ENCODE measurements at regions of chr15 and their contacts with region 1.

Region 1: GRCh38 chr15:69468241-69469121 is 15.9 kb downstream of the RPLP1 start:
- DNase-seq: peak; percentile 72 to 97 (median 84)
- ATAC-seq: peak; percentile 88
- H3K4me3 ChIP-seq: peak overlapping the region in 1 of 2 experiments; percentile 14
- H3K4me3 Mint-ChIP-seq: peak overlapping the region; percentile 60
- H3K27ac ChIP-seq: peak overlapping the region; percentile 76 to 80
- H3K27ac Mint-ChIP-seq: peak overlapping the region; percentile 98
- H3K4me1 ChIP-seq: peaks cover 27% of the 10 kb centered on the region
- H3K4me1 Mint-ChIP-seq: peaks cover 23% of the 10 kb centered on the region
- H3K27me3 ChIP-seq: no peaks in the 10 kb centered on the region
- H3K27me3 Mint-ChIP-seq: no peaks in the 10 kb centered on the region
- CTCF ChIP-seq: no peak

Region 2: GRCh38 chr15:69160141-69160993 is 308.1 kb before region 1 on chr15 and contains the start of gene GLCE:
- CTCF ChIA-PET with region 1: no interaction called
- POLR2A ChIA-PET with region 1: no interaction called
- intact Hi-C with region 1: loop called in 1 of 2 experiments (anchors 5 kb)
- DNase-seq: peak; percentile 85 to 96 (median 92)
- ATAC-seq: peak; percentile 93
- H3K4me3 ChIP-seq: peak within 1 kb of the TSS; percentile 73 to 91
- H3K4me3 Mint-ChIP-seq: peak within 1 kb of the TSS; percentile 96
- H3K27ac ChIP-seq: peak within 1 kb of the TSS; percentile 51 to 58
- H3K27ac Mint-ChIP-seq: peak within 1 kb of the TSS; percentile 89
- H3K4me1 ChIP-seq: peaks cover 12% of the 10 kb centered on the region
- H3K4me1 Mint-ChIP-seq: peaks cover 21% of the 10 kb centered on the region
- H3K27me3 ChIP-seq: no peaks in the 10 kb centered on the region
- H3K27me3 Mint-ChIP-seq: peaks cover 6% of the 10 kb centered on the region
- CTCF ChIP-seq: no peak
- total RNA-seq, gene GLCE: 4.1 to 4.2 TPM

Region 3: DNA sequence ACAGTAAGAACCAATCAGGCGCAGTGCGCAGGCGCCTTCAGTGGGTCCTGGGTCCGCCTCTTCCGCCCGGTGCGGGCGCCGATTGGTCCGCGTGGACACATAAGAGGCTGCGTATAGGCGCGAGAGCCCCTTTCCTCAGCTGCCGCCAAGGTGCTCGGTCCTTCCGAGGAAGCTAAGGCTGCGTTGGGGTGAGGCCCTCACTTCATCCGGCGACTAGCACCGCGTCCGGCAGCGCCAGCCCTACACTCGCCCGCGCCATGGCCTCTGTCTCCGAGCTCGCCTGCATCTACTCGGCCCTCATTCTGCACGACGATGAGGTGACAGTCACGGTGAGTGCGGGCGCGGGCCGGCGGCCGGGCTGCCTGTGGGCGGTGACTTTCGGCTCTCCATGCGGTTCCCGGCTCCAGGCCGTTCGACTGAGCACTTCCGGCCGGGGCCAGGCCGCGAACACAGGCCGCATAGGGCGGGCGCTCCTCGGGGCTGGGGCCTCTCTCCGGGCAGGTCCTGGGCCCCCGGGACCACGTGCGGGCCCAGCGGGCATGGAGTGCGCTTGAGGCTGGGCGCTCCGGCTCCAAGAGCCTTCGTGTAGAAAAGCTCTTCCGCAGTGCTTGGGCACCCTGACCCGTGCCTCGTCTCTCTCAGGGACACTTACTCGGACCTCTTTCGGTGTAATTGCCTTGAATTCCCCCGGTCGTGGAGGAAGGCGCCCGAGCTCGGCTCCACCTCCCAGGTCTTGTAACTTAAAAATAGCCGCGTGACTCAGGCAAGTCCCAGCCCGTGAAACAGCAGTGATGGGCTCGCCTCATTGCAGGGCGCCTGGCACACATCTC is 15.6 kb before region 1 on chr15 and contains the start of gene RPLP1:
- CTCF ChIA-PET with region 1: interaction called, 54 read pairs
- POLR2A ChIA-PET with region 1: interaction called, 109 read pairs
- intact Hi-C with region 1: loop called (anchors 1 to 2 kb)
- DNase-seq: peak; percentile 91 to 97 (median 95)
- ATAC-seq: peak; percentile 88
- H3K4me3 ChIP-seq: peak within 1 kb of the TSS; percentile 86 to 91
- H3K4me3 Mint-ChIP-seq: peak within 1 kb of the TSS; percentile 97
- H3K27ac ChIP-seq: peak within 1 kb of the TSS; percentile 75 to 92
- H3K27ac Mint-ChIP-seq: peak within 1 kb of the TSS; percentile 99
- H3K4me1 ChIP-seq: peaks cover 32% of the 10 kb centered on the region
- H3K4me1 Mint-ChIP-seq: peaks cover 47% of the 10 kb centered on the region
- H3K27me3 ChIP-seq: no peaks in the 10 kb centered on the region
- H3K27me3 Mint-ChIP-seq: no peaks in the 10 kb centered on the region
- CTCF ChIP-seq: no peak
- total RNA-seq, gene RPLP1: 2,675 to 2,824 TPM

Region 4: GRCh38 chr15:69760890-69761568 is 292.5 kb after region 1 on chr15:
- CTCF ChIA-PET with region 1: no interaction called
- POLR2A ChIA-PET with region 1: no interaction called
- intact Hi-C with region 1: loop called (anchors 2 kb)
- DNase-seq: peak; percentile 51 to 95 (median 82)
- ATAC-seq: peak; percentile 69
- H3K4me3 ChIP-seq: no peak overlapping the region
- H3K4me3 Mint-ChIP-seq: peak overlapping the region; percentile 53
- H3K27ac ChIP-seq: peak overlapping the region in 1 of 2 experiments; percentile 17
- H3K27ac Mint-ChIP-seq: peak overlapping the region; percentile 87
- H3K4me1 ChIP-seq: peaks cover 60% of the 10 kb centered on the region
- H3K4me1 Mint-ChIP-seq: peaks cover 69% of the 10 kb centered on the region
- H3K27me3 ChIP-seq: no peaks in the 10 kb centered on the region
- H3K27me3 Mint-ChIP-seq: no peaks in the 10 kb centered on the region
- CTCF ChIP-seq: no peak

Region 5: DNA sequence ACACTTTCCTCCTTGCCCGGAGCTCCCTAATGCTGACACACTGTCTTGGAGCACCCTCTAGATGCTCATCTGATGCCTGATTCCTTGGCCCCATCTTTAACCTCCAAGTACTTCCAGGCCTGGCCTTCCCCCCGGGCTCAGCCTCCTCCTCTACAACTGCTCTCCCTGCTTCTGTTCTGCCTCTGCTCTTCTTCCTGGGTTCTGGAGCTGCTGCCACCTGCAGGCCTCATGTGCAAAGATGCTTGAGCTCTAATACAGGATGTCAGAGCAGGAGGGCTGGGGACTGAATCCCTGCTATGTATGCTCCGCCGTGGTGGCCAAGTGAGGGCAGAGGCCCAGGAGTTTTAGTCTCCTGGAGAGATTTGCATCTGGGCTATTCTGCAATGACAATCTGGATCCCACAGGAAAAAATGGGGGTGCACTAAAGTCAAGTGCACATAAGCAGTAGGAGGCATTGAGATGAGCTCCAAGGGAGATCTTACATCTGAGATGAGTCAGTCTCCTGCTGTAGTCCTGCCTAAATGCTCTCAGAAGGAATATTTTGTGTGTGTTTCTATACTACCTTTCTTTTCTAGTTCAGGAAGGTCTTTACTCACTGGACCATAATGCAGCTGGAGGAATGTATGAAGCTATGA is 998.5 kb after region 1 on chr15:
- CTCF ChIA-PET with region 1: interaction called, 11 read pairs
- POLR2A ChIA-PET with region 1: interaction called, 3 read pairs
- intact Hi-C with region 1: no loop called
- DNase-seq: peak in 7 of 9 experiments; percentile 35 to 71 (median 55)
- ATAC-seq: peak; percentile 79
- H3K4me3 ChIP-seq: no peak overlapping the region
- H3K4me3 Mint-ChIP-seq: no peak overlapping the region
- H3K27ac ChIP-seq: no peak overlapping the region
- H3K27ac Mint-ChIP-seq: no peak overlapping the region
- H3K4me1 ChIP-seq: no peaks in the 10 kb centered on the region
- H3K4me1 Mint-ChIP-seq: peaks cover 5% of the 10 kb centered on the region
- H3K27me3 ChIP-seq: no peaks in the 10 kb centered on the region
- H3K27me3 Mint-ChIP-seq: peaks cover 8% of the 10 kb centered on the region
- CTCF ChIP-seq: peak; percentile 58